ENCODE measurements at regions of chr4 and their contacts with region 1.

Region 1: DNA sequence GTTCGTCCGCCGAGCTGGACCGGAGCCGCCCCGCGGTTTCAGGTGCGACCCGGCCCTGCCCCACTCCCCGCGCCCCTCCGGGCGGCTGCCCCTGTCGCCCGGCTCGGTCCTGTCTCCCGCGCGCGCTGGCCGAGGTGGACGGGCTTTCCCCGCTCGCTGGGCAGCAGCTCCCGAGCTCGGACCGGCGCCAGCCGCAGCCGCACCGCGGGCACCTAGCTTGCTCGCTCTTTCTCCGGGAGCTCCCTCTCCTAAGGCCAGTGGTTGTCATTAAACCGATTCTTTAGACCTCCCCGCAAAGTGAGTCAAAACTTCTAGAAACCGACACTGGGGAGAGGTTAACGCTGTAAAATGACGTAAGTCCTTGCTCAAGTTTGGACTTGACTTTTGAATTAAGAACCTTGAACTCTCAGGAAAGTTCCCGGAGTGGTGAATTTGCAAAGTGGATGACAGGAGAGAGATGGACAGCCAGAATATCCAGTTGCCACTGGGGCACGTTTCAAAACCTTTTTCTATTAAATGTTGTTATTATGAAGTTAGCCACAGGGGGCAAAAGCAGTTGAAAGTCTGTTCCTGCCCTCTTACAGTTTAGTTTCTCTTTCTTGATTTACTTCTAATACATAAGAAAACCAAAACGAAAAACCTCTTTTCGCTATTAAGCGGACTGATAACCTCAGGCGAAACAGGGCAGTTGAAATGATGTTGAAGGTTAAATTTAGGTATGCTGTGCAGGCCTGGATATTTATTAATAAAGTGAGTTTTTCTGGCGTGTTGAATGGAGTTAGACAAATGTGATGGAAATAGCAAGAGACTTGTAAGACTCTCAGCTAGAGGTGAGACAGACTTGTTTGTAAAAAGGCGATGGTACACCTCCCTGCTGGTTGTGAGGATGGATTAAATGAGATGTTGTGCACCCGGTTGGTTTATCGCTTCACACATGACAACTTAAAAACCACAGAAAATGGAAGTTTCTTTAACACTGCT is 847 bp downstream of the PI4K2B start:
- DNase-seq: peak in 7 of 9 experiments; percentile 4 to 87 (median 32)
- ATAC-seq: peak; percentile 56
- H3K4me3 ChIP-seq: peak overlapping the region; percentile 77 to 81
- H3K4me3 Mint-ChIP-seq: peak overlapping the region; percentile 84
- H3K27ac ChIP-seq: peak overlapping the region; percentile 67 to 84
- H3K27ac Mint-ChIP-seq: peak overlapping the region; percentile 89
- H3K4me1 ChIP-seq: peaks cover 11% of the 10 kb centered on the region
- H3K4me1 Mint-ChIP-seq: peaks cover 35% of the 10 kb centered on the region
- H3K27me3 ChIP-seq: no peaks in the 10 kb centered on the region
- H3K27me3 Mint-ChIP-seq: no peaks in the 10 kb centered on the region
- CTCF ChIP-seq: peak; percentile 66

Region 2: GRCh38 chr4:23560748-23561147 is 1673.9 kb before region 1 on chr4:
- CTCF ChIA-PET with region 1: no interaction called
- POLR2A ChIA-PET with region 1: no interaction called
- intact Hi-C with region 1: no loop called
- DNase-seq: no peak
- ATAC-seq: no peak
- H3K4me3 ChIP-seq: no peak overlapping the region
- H3K4me3 Mint-ChIP-seq: no peak overlapping the region
- H3K27ac ChIP-seq: no peak overlapping the region
- H3K27ac Mint-ChIP-seq: no peak overlapping the region
- H3K4me1 ChIP-seq: no peaks in the 10 kb centered on the region
- H3K4me1 Mint-ChIP-seq: no peaks in the 10 kb centered on the region
- H3K27me3 ChIP-seq: no peaks in the 10 kb centered on the region
- H3K27me3 Mint-ChIP-seq: no peaks in the 10 kb centered on the region
- CTCF ChIP-seq: no peak

Region 3: GRCh38 chr4:24584175-24584850 is 650.4 kb before region 1 on chr4 and contains the start of gene DHX15:
- CTCF ChIA-PET with region 1: no interaction called
- POLR2A ChIA-PET with region 1: no interaction called
- intact Hi-C with region 1: loop called (anchors 5 kb)
- DNase-seq: peak; percentile 81 to 98 (median 91)
- ATAC-seq: peak; percentile 94
- H3K4me3 ChIP-seq: peak within 1 kb of the TSS; percentile 81 to 97
- H3K4me3 Mint-ChIP-seq: peak within 1 kb of the TSS; percentile 98
- H3K27ac ChIP-seq: peak within 1 kb of the TSS; percentile 90 to 98
- H3K27ac Mint-ChIP-seq: peak within 1 kb of the TSS; percentile 98
- H3K4me1 ChIP-seq: peaks cover 18% of the 10 kb centered on the region
- H3K4me1 Mint-ChIP-seq: peaks cover 43% of the 10 kb centered on the region
- H3K27me3 ChIP-seq: no peaks in the 10 kb centered on the region
- H3K27me3 Mint-ChIP-seq: no peaks in the 10 kb centered on the region
- CTCF ChIP-seq: no peak
- total RNA-seq, gene DHX15: 211 to 221 TPM

Region 4: GRCh38 chr4:25159884-25160713 is 74.6 kb before region 1 on chr4 and contains the start of gene SEPSECS:
- CTCF ChIA-PET with region 1: interaction called, 21 read pairs
- POLR2A ChIA-PET with region 1: interaction called, 40 read pairs
- intact Hi-C with region 1: loop called (anchors 1 kb)
- DNase-seq: peak; percentile 82 to 99 (median 94)
- ATAC-seq: peak; percentile 79
- H3K4me3 ChIP-seq: peak within 1 kb of the TSS; percentile 60 to 79
- H3K4me3 Mint-ChIP-seq: peak within 1 kb of the TSS; percentile 91
- H3K27ac ChIP-seq: peak within 1 kb of the TSS; percentile 97 to 98
- H3K27ac Mint-ChIP-seq: peak within 1 kb of the TSS; percentile 94
- H3K4me1 ChIP-seq: peaks cover 18% of the 10 kb centered on the region
- H3K4me1 Mint-ChIP-seq: peaks cover 52% of the 10 kb centered on the region
- H3K27me3 ChIP-seq: no peaks in the 10 kb centered on the region
- H3K27me3 Mint-ChIP-seq: no peaks in the 10 kb centered on the region
- CTCF ChIP-seq: no peak
- total RNA-seq, gene SEPSECS: 12.5 to 13.4 TPM

Region 5: DNA sequence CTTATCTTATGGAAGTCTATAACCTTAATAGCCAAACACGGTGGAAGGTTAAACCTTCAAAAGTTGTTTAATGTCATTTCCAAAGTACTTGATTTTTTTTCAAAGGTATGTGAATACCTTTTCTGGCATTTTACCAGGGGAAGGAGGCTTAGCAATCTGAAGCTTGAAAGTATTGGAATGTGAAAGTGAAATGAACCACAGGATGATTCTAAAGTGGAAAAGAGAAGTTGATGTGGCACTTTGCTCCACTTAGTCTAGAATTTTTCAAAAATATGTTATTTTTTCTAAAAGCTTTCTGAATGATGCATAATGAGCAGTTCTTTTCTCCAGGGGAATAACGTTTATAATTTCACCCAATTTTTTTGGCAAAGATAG is 18.4 kb after region 1 on chr4:
- CTCF ChIA-PET with region 1: interaction called, 4 read pairs
- POLR2A ChIA-PET with region 1: interaction called, 3 read pairs
- intact Hi-C with region 1: loop called in 1 of 2 experiments (anchors 2 kb)
- DNase-seq: no peak
- ATAC-seq: no peak
- H3K4me3 ChIP-seq: no peak overlapping the region
- H3K4me3 Mint-ChIP-seq: no peak overlapping the region
- H3K27ac ChIP-seq: no peak overlapping the region
- H3K27ac Mint-ChIP-seq: no peak overlapping the region
- H3K4me1 ChIP-seq: no peaks in the 10 kb centered on the region
- H3K4me1 Mint-ChIP-seq: peaks cover 31% of the 10 kb centered on the region
- H3K27me3 ChIP-seq: no peaks in the 10 kb centered on the region
- H3K27me3 Mint-ChIP-seq: no peaks in the 10 kb centered on the region
- CTCF ChIP-seq: no peak

Region 6: GRCh38 chr4:25312496-25313200 is 78.0 kb after region 1 on chr4 and contains the start of gene ZCCHC4:
- CTCF ChIA-PET with region 1: interaction called, 27 read pairs
- POLR2A ChIA-PET with region 1: interaction called, 41 read pairs
- intact Hi-C with region 1: loop called (anchors 1 kb)
- DNase-seq: peak; percentile 80 to 97 (median 89)
- ATAC-seq: peak; percentile 99
- H3K4me3 ChIP-seq: peak within 1 kb of the TSS; percentile 83 to 95
- H3K4me3 Mint-ChIP-seq: peak within 1 kb of the TSS; percentile 99
- H3K27ac ChIP-seq: peak within 1 kb of the TSS; percentile 48 to 73
- H3K27ac Mint-ChIP-seq: peak within 1 kb of the TSS; percentile 96
- H3K4me1 ChIP-seq: peaks cover 9% of the 10 kb centered on the region
- H3K4me1 Mint-ChIP-seq: peaks cover 27% of the 10 kb centered on the region
- H3K27me3 ChIP-seq: no peaks in the 10 kb centered on the region
- H3K27me3 Mint-ChIP-seq: peaks cover 8% of the 10 kb centered on the region
- CTCF ChIP-seq: peak; percentile 99
- total RNA-seq, gene ZCCHC4: 6.5 to 9.9 TPM

Region 7: GRCh38 chr4:25913851-25914669 is 679.4 kb after region 1 on chr4 and contains the start of gene SMIM20:
- CTCF ChIA-PET with region 1: no interaction called
- POLR2A ChIA-PET with region 1: no interaction called
- intact Hi-C with region 1: loop called in 1 of 2 experiments (anchors 5 kb)
- DNase-seq: peak; percentile 81 to 95 (median 87)
- ATAC-seq: peak; percentile 94
- H3K4me3 ChIP-seq: peak within 1 kb of the TSS; percentile 72 to 78
- H3K4me3 Mint-ChIP-seq: peak within 1 kb of the TSS; percentile 97
- H3K27ac ChIP-seq: peak within 1 kb of the TSS; percentile 81 to 95
- H3K27ac Mint-ChIP-seq: peak within 1 kb of the TSS; percentile 98
- H3K4me1 ChIP-seq: peaks cover 18% of the 10 kb centered on the region
- H3K4me1 Mint-ChIP-seq: peaks cover 24% of the 10 kb centered on the region
- H3K27me3 ChIP-seq: no peaks in the 10 kb centered on the region
- H3K27me3 Mint-ChIP-seq: no peaks in the 10 kb centered on the region
- CTCF ChIP-seq: no peak
- total RNA-seq, gene SMIM20: 7.5 to 9.8 TPM

Measured in CD8-positive, alpha-beta T cell (primary cell).